Calu3 (cell line): ENCODE measurements at regions of chr10 and their contacts with region 1.

Region 1: GRCh38 chr10:71893920-71894319 is 42.9 kb upstream of the PSAP start:
- DNase-seq: no peak
- H3K4me3 Mint-ChIP-seq: no peak overlapping the region
- H3K27ac Mint-ChIP-seq: no peak overlapping the region
- H3K4me1 Mint-ChIP-seq: peaks cover 16% of the 10 kb centered on the region
- H3K27me3 Mint-ChIP-seq: no peaks in the 10 kb centered on the region
- CTCF ChIP-seq: no peak

Region 2: GRCh38 chr10:71696628-71697326 is 197.1 kb before region 1 on chr10:
- CTCF ChIA-PET with region 1: no interaction called
- intact Hi-C with region 1: no loop called
- DNase-seq: peak; percentile 81
- H3K4me3 Mint-ChIP-seq: no peak overlapping the region
- H3K27ac Mint-ChIP-seq: no peak overlapping the region
- H3K4me1 Mint-ChIP-seq: peaks cover 8% of the 10 kb centered on the region
- H3K27me3 Mint-ChIP-seq: peaks cover under 1% of the 10 kb centered on the region
- CTCF ChIP-seq: peak; percentile 94

Region 3: GRCh38 chr10:71860243-71861029 is 33.5 kb before region 1 on chr10:
- CTCF ChIA-PET with region 1: interaction called, 14 read pairs
- intact Hi-C with region 1: no loop called
- DNase-seq: peak; percentile 90
- H3K4me3 Mint-ChIP-seq: peak overlapping the region; percentile 46
- H3K27ac Mint-ChIP-seq: peak overlapping the region; percentile 96
- H3K4me1 Mint-ChIP-seq: peaks cover 38% of the 10 kb centered on the region
- H3K27me3 Mint-ChIP-seq: no peaks in the 10 kb centered on the region
- CTCF ChIP-seq: no peak

Region 4: GRCh38 chr10:71868192-71868697 is 25.7 kb before region 1 on chr10:
- CTCF ChIA-PET with region 1: interaction called, 10 read pairs
- intact Hi-C with region 1: no loop called
- DNase-seq: peak; percentile 80
- H3K4me3 Mint-ChIP-seq: peak overlapping the region; percentile 25
- H3K27ac Mint-ChIP-seq: peak overlapping the region; percentile 71
- H3K4me1 Mint-ChIP-seq: peaks cover 27% of the 10 kb centered on the region
- H3K27me3 Mint-ChIP-seq: no peaks in the 10 kb centered on the region
- CTCF ChIP-seq: no peak

Region 5: GRCh38 chr10:71957546-71958275 is 63.8 kb after region 1 on chr10:
- CTCF ChIA-PET with region 1: interaction called, 14 read pairs
- intact Hi-C with region 1: no loop called
- DNase-seq: no peak
- H3K4me3 Mint-ChIP-seq: no peak overlapping the region
- H3K27ac Mint-ChIP-seq: no peak overlapping the region
- H3K4me1 Mint-ChIP-seq: peaks cover 14% of the 10 kb centered on the region
- H3K27me3 Mint-ChIP-seq: peaks cover 16% of the 10 kb centered on the region
- CTCF ChIP-seq: no peak

Region 6: GRCh38 chr10:71963756-71964668 is 70.1 kb after region 1 on chr10 and contains the start of gene CHST3:
- CTCF ChIA-PET with region 1: interaction called, 15 read pairs
- intact Hi-C with region 1: no loop called
- DNase-seq: peak; percentile 61
- H3K4me3 Mint-ChIP-seq: peak within 1 kb of the TSS; percentile 95
- H3K27ac Mint-ChIP-seq: peak within 1 kb of the TSS; percentile 30
- H3K4me1 Mint-ChIP-seq: peaks cover 43% of the 10 kb centered on the region
- H3K27me3 Mint-ChIP-seq: peaks cover 18% of the 10 kb centered on the region
- CTCF ChIP-seq: no peak
- total RNA-seq, gene CHST3: 14.3 and 32.4 TPM in 2 replicates

Region 7: DNA sequence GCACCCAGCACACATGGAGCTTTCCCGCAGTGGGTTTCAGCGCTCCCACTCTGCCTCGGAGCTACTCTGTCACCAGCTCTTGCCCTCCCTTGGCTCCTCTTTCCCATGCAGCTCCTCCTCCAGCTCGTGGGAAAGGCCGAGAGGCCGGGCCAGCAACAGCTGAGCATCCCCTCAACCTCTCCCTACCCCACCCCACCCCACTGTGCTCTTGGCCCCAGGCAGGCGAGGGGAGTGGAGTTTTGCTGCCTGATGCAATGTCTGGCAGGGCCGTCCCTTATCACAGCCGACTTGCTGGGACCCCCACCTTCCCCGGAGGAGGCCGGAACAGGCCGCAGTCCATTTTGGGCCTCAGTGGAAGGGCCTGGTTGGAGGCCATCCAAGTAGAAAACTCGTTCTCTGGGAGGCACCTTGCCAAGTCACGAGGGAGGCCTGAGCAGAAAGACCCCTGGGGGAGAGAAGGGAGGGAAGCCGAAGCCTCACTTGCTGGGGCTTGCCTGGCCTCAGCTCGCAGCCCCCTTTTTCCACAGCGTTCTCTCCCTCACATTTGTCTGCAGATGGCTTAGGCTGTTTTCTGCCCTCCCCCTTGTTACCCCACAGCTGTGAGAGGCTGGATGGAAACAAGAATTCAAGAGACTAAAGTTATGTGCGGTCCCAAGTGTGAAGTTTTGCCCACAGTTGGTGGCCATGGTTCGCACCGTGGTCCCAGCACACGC is 105.6 kb after region 1 on chr10:
- CTCF ChIA-PET with region 1: interaction called, 10 read pairs
- intact Hi-C with region 1: no loop called
- DNase-seq: no peak
- H3K4me3 Mint-ChIP-seq: peak overlapping the region; percentile 31
- H3K27ac Mint-ChIP-seq: peak overlapping the region; percentile 53
- H3K4me1 Mint-ChIP-seq: peaks cover 52% of the 10 kb centered on the region
- H3K27me3 Mint-ChIP-seq: no peaks in the 10 kb centered on the region
- CTCF ChIP-seq: no peak

Region 8: GRCh38 chr10:72215652-72216549 is 322.0 kb after region 1 on chr10 and contains the starts of genes ANAPC16 and ASCC1:
- CTCF ChIA-PET with region 1: no interaction called
- intact Hi-C with region 1: loop called (anchors 10 kb)
- DNase-seq: peak; percentile 98
- H3K4me3 Mint-ChIP-seq: peak within 1 kb of the TSS; percentile 97
- H3K27ac Mint-ChIP-seq: peak within 1 kb of the TSS; percentile 92
- H3K4me1 Mint-ChIP-seq: peaks cover 27% of the 10 kb centered on the region
- H3K27me3 Mint-ChIP-seq: no peaks in the 10 kb centered on the region
- CTCF ChIP-seq: no peak
- total RNA-seq, gene ANAPC16: 118 and 119 TPM in 2 replicates
- total RNA-seq, gene ASCC1: 51.3 and 59.3 TPM in 2 replicates

Region 9: DNA sequence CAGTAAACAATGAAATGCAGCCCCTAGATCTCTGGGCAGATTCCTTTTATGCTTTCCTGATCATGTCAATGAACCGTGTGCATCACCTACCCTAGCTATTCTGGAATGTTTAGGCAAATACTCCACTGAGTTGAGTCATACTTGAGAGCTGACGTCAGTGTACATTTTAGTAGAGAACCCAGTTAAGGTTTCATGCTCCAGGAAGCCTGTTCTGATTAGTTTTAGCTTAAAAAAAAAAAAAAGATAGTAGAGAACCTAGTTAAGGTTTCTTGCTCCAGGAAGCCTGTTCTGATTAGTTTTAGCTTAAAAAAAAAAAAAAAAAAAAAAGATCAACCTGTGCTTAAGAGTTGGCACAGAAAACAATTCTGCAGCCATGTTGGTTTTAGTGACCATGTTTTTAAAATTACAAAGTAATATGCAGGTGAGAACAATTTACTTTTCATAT is 794.3 kb after region 1 on chr10:
- CTCF ChIA-PET with region 1: no interaction called
- intact Hi-C with region 1: no loop called
- DNase-seq: peak; percentile 67
- H3K4me3 Mint-ChIP-seq: peak overlapping the region; percentile 27
- H3K27ac Mint-ChIP-seq: peak overlapping the region; percentile 77
- H3K4me1 Mint-ChIP-seq: peaks cover 57% of the 10 kb centered on the region
- H3K27me3 Mint-ChIP-seq: no peaks in the 10 kb centered on the region
- CTCF ChIP-seq: no peak